HEK293T (cell line): ENCODE measurements at regions of chrX and their contacts with region 1.

Region 1: GRCh38 chrX:104156630-104157529 is at the start of gene SLC25A53:
- DNase-seq: peak; percentile 88

Region 2: DNA sequence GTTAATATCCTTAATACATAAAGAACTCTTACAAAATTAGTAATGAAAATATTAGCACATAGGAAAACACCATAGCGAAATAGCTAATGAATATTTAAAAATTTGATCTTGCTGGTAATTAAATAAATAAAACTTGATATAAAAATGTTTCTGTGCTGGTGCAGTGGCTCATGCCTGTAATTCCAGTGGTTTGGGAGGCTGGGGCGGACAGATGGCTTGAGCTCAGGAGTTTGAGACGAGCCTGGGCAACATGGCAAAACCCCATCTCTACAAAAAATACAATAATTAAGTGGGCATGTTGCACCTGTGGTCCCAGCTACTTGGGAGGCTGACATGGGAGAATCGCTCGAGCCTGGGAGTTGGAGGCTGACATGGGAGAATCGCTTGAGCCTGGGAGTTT is 17.0 kb after region 1 on chrX:
- CTCF ChIA-PET with region 1: no interaction called
- POLR2A ChIA-PET with region 1: interaction called, 14 read pairs
- DNase-seq: no peak

Region 3: DNA sequence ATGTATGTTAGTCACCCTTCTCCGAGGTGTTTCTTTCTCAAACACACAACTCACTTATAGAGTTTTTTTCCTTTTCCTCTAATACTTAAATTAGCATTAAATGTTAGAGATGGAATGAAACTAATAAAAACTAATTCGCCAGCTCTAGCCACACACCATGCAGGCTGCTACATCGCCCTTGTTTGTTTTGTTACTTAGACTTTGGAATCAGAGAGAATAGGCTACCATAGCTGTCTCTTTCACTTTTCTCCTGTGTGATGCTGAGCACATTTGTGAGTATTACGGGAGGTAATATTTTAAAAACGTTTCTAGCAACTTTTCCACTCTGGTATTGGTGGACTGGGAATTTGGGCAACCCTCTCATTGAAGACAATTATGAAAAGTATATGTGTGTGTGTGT is 54.3 kb after region 1 on chrX:
- CTCF ChIA-PET with region 1: no interaction called
- POLR2A ChIA-PET with region 1: no interaction called
- DNase-seq: no peak